CD4-positive, alpha-beta T cell (primary cell): ENCODE measurements at regions of chr12 and their contacts with region 1.

Region 1: DNA sequence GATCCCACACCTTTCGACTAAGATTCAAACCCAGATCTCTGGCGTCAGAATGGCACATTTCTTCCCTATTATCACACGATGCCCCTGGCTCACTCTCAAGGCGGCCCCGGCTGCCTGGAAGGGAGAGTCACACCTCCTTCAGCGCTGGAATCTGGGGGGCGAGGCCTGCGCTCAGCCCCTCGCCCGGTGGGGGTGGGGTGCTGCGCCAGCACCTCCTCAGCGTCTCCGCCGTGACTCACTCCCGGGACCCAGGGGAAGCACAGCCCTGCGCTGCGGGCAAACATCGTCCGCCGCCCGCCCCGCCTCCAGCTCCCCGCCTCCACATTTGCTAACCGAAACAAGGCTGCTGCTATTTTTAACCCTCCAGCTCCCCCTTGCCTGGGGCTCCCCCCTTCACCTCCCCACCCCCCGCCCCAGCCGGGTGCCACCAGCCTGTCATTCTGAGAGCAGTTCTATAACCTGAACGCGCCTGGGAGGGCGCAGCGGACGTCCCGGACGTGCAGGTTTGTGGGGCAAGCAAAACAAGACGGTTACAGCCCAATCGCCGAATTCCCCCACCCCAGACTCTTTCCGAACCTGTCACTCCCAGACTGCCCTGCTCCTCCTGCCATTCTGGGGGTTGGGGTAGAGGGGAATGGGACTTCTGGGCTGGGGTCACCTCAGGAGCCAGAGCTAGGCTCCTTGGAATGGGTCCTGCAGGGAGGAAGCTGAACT is 6.7 kb downstream of the HDAC7 start:
- DNase-seq: peak; percentile 81 to 96 (median 92)
- ATAC-seq: peak; percentile 74
- H3K4me3 ChIP-seq: peak overlapping the region; percentile 58
- H3K4me3 Mint-ChIP-seq: peak overlapping the region; percentile 87
- H3K27ac ChIP-seq: peak overlapping the region; percentile 91 to 98
- H3K27ac Mint-ChIP-seq: peak overlapping the region; percentile 96
- H3K4me1 ChIP-seq: peaks cover 99% of the 10 kb centered on the region
- H3K4me1 Mint-ChIP-seq: peaks cover 99% of the 10 kb centered on the region
- H3K27me3 ChIP-seq: no peaks in the 10 kb centered on the region
- H3K27me3 Mint-ChIP-seq: no peaks in the 10 kb centered on the region
- CTCF ChIP-seq: no peak

Region 2: GRCh38 chr12:47797441-47797840 is 15.5 kb before region 1 on chr12:
- CTCF ChIA-PET with region 1: interaction called, 26 read pairs
- POLR2A ChIA-PET with region 1: interaction called, 12 read pairs
- intact Hi-C with region 1: no loop called
- DNase-seq: peak in 9 of 14 experiments; percentile 17 to 69 (median 44)
- ATAC-seq: peak; percentile 80
- H3K4me3 ChIP-seq: no peak overlapping the region
- H3K4me3 Mint-ChIP-seq: no peak overlapping the region
- H3K27ac ChIP-seq: peak overlapping the region in 1 of 2 donors; percentile 11
- H3K27ac Mint-ChIP-seq: peak overlapping the region; percentile 83
- H3K4me1 ChIP-seq: peaks cover 47% of the 10 kb centered on the region
- H3K4me1 Mint-ChIP-seq: peaks cover 34% of the 10 kb centered on the region
- H3K27me3 ChIP-seq: no peaks in the 10 kb centered on the region
- H3K27me3 Mint-ChIP-seq: no peaks in the 10 kb centered on the region
- CTCF ChIP-seq: peak; percentile 40

Region 3: DNA sequence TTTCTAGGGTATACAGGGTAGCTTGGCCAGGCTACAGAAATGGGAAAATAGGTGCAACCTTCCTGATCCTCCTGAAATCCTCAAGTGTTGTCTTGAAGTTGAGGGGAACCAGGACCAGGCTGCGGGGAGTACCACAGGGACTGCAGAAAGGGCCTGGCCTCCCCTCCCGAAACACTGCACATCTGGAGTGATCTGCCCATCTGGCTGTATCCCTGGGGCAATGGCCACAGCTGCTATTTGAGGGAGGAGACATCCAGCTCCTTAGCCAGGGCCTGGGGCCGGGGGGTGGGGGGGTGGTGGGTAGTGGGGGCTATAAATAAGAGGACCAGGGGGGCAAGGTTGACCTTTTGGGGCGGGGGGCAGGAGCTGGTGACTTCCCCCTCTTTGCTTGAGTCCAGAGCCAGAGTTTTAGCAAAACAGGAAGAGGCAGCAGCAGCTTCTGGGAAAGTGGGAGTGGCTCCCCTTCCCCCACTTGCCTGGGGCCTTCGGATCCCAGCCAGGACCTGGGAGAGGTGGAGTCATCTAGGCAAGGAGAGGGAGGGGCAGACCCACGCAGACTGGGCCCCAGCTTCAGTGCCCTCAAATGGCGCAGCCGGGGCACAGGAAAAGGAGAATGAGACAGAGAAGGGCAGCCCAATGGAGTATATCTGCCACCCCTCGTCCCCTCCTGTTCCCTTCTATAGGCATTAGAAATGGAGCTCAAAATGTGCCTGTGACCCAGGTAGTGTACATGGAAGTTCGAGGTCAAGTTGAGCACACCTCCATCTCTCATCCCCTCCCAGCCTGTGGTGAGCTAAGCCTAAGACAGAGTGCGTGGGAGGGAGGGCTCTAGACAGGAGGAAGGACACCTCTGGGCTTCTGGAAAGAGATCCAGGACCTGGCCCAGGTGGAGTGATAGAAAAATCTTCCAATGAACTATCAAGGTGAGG is 15.9 kb after region 1 on chr12:
- CTCF ChIA-PET with region 1: interaction called, 164 read pairs
- POLR2A ChIA-PET with region 1: interaction called, 274 read pairs
- intact Hi-C with region 1: loop called in 1 of 2 experiments (anchors 2 kb)
- DNase-seq: peak in 2 of 14 experiments; percentile 24 to 45
- ATAC-seq: no peak
- H3K4me3 ChIP-seq: no peak overlapping the region
- H3K4me3 Mint-ChIP-seq: peak overlapping the region; percentile 27
- H3K27ac ChIP-seq: no peak overlapping the region
- H3K27ac Mint-ChIP-seq: peak overlapping the region; percentile 81
- H3K4me1 ChIP-seq: peaks cover 99% of the 10 kb centered on the region
- H3K4me1 Mint-ChIP-seq: peaks cover 92% of the 10 kb centered on the region
- H3K27me3 ChIP-seq: no peaks in the 10 kb centered on the region
- H3K27me3 Mint-ChIP-seq: no peaks in the 10 kb centered on the region
- CTCF ChIP-seq: no peak

Region 4: GRCh38 chr12:47904713-47905310 is 91.9 kb after region 1 on chr12 and contains the start of gene VDR:
- CTCF ChIA-PET with region 1: interaction called, 3 read pairs
- POLR2A ChIA-PET with region 1: interaction called, 3 read pairs
- intact Hi-C with region 1: loop called in 1 of 2 experiments (anchors 10 kb)
- DNase-seq: peak; percentile 49 to 91 (median 66)
- ATAC-seq: peak; percentile 70
- H3K4me3 ChIP-seq: peak within 1 kb of the TSS; percentile 81
- H3K4me3 Mint-ChIP-seq: peak within 1 kb of the TSS; percentile 95
- H3K27ac ChIP-seq: no peak within 1 kb of the TSS
- H3K27ac Mint-ChIP-seq: peak within 1 kb of the TSS; percentile 55
- H3K4me1 ChIP-seq: peaks cover 59% of the 10 kb centered on the region
- H3K4me1 Mint-ChIP-seq: peaks cover 59% of the 10 kb centered on the region
- H3K27me3 ChIP-seq: no peaks in the 10 kb centered on the region
- H3K27me3 Mint-ChIP-seq: no peaks in the 10 kb centered on the region
- CTCF ChIP-seq: peak; percentile 60
- total RNA-seq, gene VDR: 0.93 to 1.6 TPM